CD4-positive, alpha-beta T cell (primary cell): ENCODE measurements at regions of chr6 and their contacts with region 1.

Region 1: GRCh38 chr6:24431045-24431451 is 28.3 kb downstream of the MRS2 start:
- DNase-seq: peak in 4 of 14 experiments; percentile 34 to 65 (median 53)
- ATAC-seq: no peak
- H3K4me3 ChIP-seq: no peak overlapping the region
- H3K4me3 Mint-ChIP-seq: no peak overlapping the region
- H3K27ac ChIP-seq: no peak overlapping the region
- H3K27ac Mint-ChIP-seq: no peak overlapping the region
- H3K4me1 ChIP-seq: no peaks in the 10 kb centered on the region
- H3K4me1 Mint-ChIP-seq: no peaks in the 10 kb centered on the region
- H3K27me3 ChIP-seq: no peaks in the 10 kb centered on the region
- H3K27me3 Mint-ChIP-seq: no peaks in the 10 kb centered on the region
- CTCF ChIP-seq: peak; percentile 61

Region 2: GRCh38 chr6:24520929-24521546 is 90.0 kb after region 1 on chr6:
- CTCF ChIA-PET with region 1: no interaction called
- POLR2A ChIA-PET with region 1: no interaction called
- intact Hi-C with region 1: loop called in 1 of 2 experiments (anchors 1 kb)
- DNase-seq: peak in 11 of 14 experiments; percentile 7 to 54 (median 33)
- ATAC-seq: peak; percentile 43
- H3K4me3 ChIP-seq: no peak overlapping the region
- H3K4me3 Mint-ChIP-seq: no peak overlapping the region
- H3K27ac ChIP-seq: no peak overlapping the region
- H3K27ac Mint-ChIP-seq: no peak overlapping the region
- H3K4me1 ChIP-seq: no peaks in the 10 kb centered on the region
- H3K4me1 Mint-ChIP-seq: no peaks in the 10 kb centered on the region
- H3K27me3 ChIP-seq: no peaks in the 10 kb centered on the region
- H3K27me3 Mint-ChIP-seq: no peaks in the 10 kb centered on the region
- CTCF ChIP-seq: peak; percentile 59

Region 3: GRCh38 chr6:24689964-24690363 is 258.9 kb after region 1 on chr6:
- CTCF ChIA-PET with region 1: no interaction called
- POLR2A ChIA-PET with region 1: no interaction called
- intact Hi-C with region 1: loop called in 1 of 2 experiments (anchors 5 kb)
- DNase-seq: no peak
- ATAC-seq: no peak
- H3K4me3 ChIP-seq: no peak overlapping the region
- H3K4me3 Mint-ChIP-seq: no peak overlapping the region
- H3K27ac ChIP-seq: no peak overlapping the region
- H3K27ac Mint-ChIP-seq: no peak overlapping the region
- H3K4me1 ChIP-seq: no peaks in the 10 kb centered on the region
- H3K4me1 Mint-ChIP-seq: peaks cover 15% of the 10 kb centered on the region
- H3K27me3 ChIP-seq: no peaks in the 10 kb centered on the region
- H3K27me3 Mint-ChIP-seq: no peaks in the 10 kb centered on the region
- CTCF ChIP-seq: no peak

Region 4: GRCh38 chr6:24699521-24700359 is 268.7 kb after region 1 on chr6:
- CTCF ChIA-PET with region 1: no interaction called
- POLR2A ChIA-PET with region 1: no interaction called
- intact Hi-C with region 1: loop called in 1 of 2 experiments (anchors 5 kb)
- DNase-seq: no peak
- ATAC-seq: no peak
- H3K4me3 ChIP-seq: no peak overlapping the region
- H3K4me3 Mint-ChIP-seq: no peak overlapping the region
- H3K27ac ChIP-seq: no peak overlapping the region
- H3K27ac Mint-ChIP-seq: peak overlapping the region; percentile 69
- H3K4me1 ChIP-seq: no peaks in the 10 kb centered on the region
- H3K4me1 Mint-ChIP-seq: peaks cover 25% of the 10 kb centered on the region
- H3K27me3 ChIP-seq: no peaks in the 10 kb centered on the region
- H3K27me3 Mint-ChIP-seq: no peaks in the 10 kb centered on the region
- CTCF ChIP-seq: no peak